Breast epithelium (tissue), 4 donors: ENCODE measurements at regions of chr4 and their contacts with region 1.

Region 1: GRCh38 chr4:33625748-33626147 is 2618.6 kb downstream of the ARAP2 start:
- DNase-seq: no peak
- H3K4me3 ChIP-seq: no peak overlapping the region
- H3K27ac ChIP-seq: no peak overlapping the region
- H3K4me1 ChIP-seq: no peaks in the 10 kb centered on the region
- H3K27me3 ChIP-seq: no peaks in the 10 kb centered on the region
- CTCF ChIP-seq: no peak
- POLR2A ChIP-seq: no peak

Region 2: DNA sequence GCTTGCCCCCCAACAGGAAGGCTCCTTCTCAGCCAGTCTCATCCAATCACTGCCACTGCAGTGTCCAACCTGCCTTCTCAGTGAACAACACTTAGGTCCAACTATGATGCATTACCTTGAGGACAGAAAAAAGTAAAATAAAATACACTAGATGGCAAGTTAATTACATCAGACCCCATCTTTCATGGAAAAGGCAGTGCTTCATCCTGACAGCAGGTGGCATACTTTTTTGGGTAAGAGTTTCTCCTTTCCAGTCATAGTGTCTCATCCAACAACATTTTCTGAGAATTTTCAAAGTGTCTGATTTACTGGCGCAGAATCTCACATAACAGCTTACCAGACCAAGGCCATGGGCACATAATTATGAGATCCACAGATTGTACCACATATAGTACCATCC is 1162.8 kb before region 1 on chr4:
- intact Hi-C with region 1: loop called (anchors 5 kb)
- DNase-seq: no peak
- H3K4me3 ChIP-seq: no peak overlapping the region
- H3K27ac ChIP-seq: no peak overlapping the region
- H3K4me1 ChIP-seq: no peaks in the 10 kb centered on the region
- H3K27me3 ChIP-seq: no peaks in the 10 kb centered on the region
- CTCF ChIP-seq: no peak
- POLR2A ChIP-seq: no peak

Region 3: DNA sequence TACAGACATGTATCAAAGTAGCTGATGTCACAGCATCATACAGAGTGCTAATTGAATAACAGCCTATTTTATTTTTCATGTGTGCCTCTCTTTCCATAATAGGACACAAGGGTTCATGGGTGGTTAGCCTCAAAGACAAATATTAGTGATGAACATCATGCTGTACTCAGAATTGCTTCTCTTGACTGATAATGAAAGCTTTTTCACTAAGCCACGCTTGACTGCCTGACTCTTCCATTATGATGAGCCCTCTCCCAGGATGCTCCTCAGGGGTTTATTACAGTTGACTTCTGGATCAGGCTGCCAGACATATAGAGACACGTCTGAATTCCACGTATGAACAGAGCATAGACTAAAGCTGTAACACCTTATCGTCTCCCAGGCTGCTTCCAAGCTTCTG is 148.0 kb before region 1 on chr4:
- intact Hi-C with region 1: loop called (anchors 5 kb)
- DNase-seq: no peak
- H3K4me3 ChIP-seq: no peak overlapping the region
- H3K27ac ChIP-seq: no peak overlapping the region
- H3K4me1 ChIP-seq: no peaks in the 10 kb centered on the region
- H3K27me3 ChIP-seq: no peaks in the 10 kb centered on the region
- CTCF ChIP-seq: no peak
- POLR2A ChIP-seq: no peak